Ovary (tissue), 10 donors: ENCODE measurements at regions of chr18 and their contacts with region 1.

Region 1: GRCh38 chr18:62584241-62585120 is 61.7 kb downstream of the ZCCHC2 start:
- DNase-seq: peak; percentile 78 to 91 (median 88)
- H3K4me3 ChIP-seq: no peak overlapping the region
- H3K27ac ChIP-seq: no peak overlapping the region
- H3K4me1 ChIP-seq: no peaks in the 10 kb centered on the region
- H3K27me3 ChIP-seq: no peaks in the 10 kb centered on the region
- CTCF ChIP-seq: peak; percentile 93 to 98 (median 96)
- EP300 ChIP-seq: no peak
- POLR2A ChIP-seq: no peak

Region 2: DNA sequence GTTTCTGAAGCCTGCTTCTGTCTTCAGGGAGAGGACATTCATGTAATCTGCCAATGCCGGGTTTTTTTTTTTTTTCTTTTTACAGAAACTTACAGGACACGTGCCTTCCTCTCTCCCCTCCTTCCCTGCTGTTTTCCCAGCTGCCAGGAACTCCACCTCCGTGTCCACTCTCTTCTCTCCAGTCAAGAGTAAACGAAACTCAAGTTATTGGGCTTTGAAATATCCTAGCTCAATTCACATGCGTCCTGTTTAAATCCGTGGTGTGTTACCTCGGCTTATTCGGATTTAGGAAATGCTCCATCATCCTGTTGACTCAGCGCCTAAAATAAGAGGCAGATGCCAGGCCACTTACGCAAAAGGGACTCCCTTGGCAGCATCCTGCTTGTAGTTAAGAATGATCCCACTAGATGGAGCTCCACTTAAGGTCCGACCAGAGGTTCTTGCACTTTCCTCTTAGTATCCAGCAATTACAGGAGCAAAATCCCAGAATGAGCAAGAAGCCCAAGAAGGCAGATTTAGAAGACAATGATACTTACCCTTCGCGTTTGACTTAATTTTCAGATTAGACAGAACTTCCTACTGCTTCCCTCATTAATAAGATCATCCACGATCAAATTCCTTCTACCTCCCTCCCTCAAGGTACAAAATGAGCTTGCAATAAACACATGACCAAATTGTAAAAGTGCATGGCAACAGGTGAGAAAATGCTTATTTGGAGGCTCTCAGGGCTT is 158.9 kb before region 1 on chr18:
- intact Hi-C with region 1: loop called in 2 of 4 experiments (anchors 2 kb)
- DNase-seq: peak; percentile 68 to 89 (median 74)
- H3K4me3 ChIP-seq: peak overlapping the region; percentile 18
- H3K27ac ChIP-seq: peak overlapping the region in 1 of 2 donors; percentile 59
- H3K4me1 ChIP-seq: peaks cover 2% of the 10 kb centered on the region
- H3K27me3 ChIP-seq: no peaks in the 10 kb centered on the region
- CTCF ChIP-seq: peak; percentile 72 to 78 (median 73)
- EP300 ChIP-seq: no peak
- POLR2A ChIP-seq: no peak

Region 3: GRCh38 chr18:62643181-62643580 is 58.7 kb after region 1 on chr18:
- intact Hi-C with region 1: no loop called
- DNase-seq: no peak
- H3K4me3 ChIP-seq: no peak overlapping the region
- H3K27ac ChIP-seq: no peak overlapping the region
- H3K4me1 ChIP-seq: no peaks in the 10 kb centered on the region
- H3K27me3 ChIP-seq: no peaks in the 10 kb centered on the region
- CTCF ChIP-seq: no peak
- EP300 ChIP-seq: no peak
- POLR2A ChIP-seq: no peak

Region 4: DNA sequence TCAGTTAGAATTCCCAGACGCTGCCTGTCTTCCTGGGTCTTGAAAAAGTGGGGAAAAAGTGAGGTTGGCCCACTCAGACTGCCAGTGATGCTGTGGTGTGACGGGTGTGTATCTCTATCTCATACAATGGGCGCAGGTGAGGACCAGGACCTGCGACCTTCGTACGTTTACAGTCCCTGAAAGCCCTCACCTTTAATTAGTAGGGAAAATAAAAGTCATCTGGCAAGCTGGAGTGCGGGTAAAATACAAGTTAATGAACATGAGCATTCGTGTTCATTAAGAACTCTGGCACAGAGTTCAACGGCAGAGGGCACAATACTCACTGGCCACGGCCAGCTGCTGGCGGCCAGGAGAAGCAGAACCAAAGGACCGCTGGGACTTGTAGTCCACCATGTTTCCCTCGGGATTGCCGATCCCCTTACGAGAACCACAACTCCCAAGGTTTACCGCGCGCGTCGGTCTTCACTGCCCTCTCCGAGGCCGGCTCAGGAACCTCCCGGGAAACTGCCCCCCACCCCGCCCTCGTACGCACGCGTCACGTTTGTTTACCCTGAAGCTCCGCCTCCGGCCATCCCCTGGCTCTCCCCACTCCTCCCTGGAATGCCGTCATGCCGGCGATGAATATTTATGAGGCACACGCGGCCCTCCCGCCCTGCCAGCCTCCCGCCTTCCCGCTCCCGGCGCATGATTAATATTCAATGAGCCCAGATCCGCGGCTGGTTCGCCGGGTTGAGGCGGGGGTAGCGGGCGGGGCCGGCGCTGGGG is 130.4 kb after region 1 on chr18:
- intact Hi-C with region 1: loop called in 2 of 4 experiments (anchors 1 to 10 kb)
- DNase-seq: peak; percentile 100
- H3K4me3 ChIP-seq: peak overlapping the region; percentile 59
- H3K27ac ChIP-seq: peak overlapping the region; percentile 91 to 99
- H3K4me1 ChIP-seq: peaks cover 1% of the 10 kb centered on the region
- H3K27me3 ChIP-seq: no peaks in the 10 kb centered on the region
- CTCF ChIP-seq: peak; percentile 72 to 86 (median 81)
- EP300 ChIP-seq: no peak
- POLR2A ChIP-seq: no peak